ENCODE measurements at regions of chr2 and their contacts with region 1.

Region 1: DNA sequence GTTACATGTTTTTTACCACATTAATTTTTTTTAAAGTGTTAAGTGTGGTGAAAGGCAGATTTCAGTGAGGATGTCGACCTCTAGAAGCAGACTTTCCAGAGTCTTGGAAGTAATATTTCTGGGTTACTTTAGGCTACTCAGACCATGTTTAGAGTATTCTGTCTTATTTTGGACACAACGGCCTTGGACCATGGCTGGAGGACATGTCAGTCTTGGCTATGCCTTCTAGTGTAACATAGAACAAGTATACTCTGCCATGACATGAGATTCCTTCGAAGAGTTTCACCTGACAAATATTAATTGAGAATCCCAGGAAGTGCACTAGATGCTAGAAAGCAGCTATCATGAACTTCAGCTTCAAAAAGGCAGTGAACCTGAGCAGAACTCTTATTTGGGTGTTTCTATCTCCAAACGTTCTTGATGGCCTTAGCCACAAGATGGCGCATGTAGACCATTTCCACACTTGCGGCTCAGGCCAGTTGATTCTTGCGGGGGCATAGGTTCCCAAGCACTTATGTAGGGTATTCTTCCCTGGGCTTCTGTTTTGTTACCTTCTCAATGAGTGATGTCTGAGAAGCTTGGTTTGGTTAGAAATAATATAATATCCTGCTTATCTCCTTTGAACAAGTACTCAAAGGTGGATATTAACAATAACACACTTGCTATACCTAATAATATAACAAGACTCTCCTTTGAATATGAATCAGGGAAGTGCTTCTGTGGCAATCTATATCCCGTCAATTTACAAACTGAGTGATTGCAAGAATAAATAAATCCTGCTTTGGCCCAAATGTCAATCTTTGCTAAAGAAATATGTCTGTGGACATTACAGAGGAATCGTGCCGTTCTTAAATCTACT is 62.0 kb downstream of the CACNB4 start:
- DNase-seq: peak; percentile 26 to 49
- ATAC-seq: peak; percentile 82 to 83
- H3K4me3 ChIP-seq: no peak overlapping the region
- H3K27ac ChIP-seq: no peak overlapping the region
- H3K4me1 ChIP-seq: peaks cover 15 to 19% of the 10 kb centered on the region in 2 donors
- H3K27me3 ChIP-seq: no peaks in the 10 kb centered on the region
- CTCF ChIP-seq: peak; percentile 44 to 83 (median 63)
- POLR2A ChIP-seq: no peak

Region 2: DNA sequence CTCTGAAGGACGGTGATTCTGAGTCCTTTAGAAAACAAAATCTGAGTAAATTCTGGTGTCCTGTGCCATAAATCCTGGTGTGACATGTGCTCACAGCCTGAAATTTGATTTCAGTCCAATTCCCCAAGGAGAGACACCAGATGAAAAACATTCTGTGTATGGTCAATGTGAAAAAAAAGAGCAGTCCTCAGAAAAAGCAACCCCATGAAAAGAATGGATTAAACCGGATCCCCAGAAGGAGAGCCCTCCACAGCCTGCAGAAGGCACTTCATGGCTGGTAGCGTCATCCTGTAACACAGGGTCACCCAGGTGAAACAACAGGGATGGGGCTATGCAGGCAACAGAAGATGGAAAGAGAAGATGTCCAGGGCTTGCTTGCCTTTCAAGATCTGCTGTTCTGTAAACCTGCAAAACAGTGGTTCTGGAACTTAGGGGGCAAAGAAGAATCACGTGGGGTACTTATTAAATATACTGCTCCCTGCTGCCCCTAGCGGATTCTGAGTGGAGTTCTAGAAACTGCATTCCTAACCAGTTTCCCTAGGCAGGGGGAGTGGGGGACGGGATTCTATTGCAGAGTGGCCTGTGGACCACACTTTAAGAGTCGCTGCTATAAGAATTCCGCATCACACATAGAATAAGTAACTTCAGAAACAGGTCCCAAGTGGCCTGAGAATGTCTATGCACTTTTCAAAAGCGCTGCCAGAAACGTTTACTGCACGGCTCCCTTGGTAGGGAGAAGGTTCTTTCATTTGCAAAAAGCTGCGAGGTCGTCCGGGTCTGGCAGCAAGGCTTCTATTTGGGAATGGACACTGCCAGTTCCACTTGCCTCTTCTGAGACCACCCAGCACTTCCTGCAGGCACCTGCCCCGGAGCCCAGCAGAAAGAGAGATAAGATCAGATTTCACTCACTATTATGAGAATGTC is 89.7 kb before region 1 on chr2:
- in situ Hi-C with region 1: no loop called
- intact Hi-C with region 1: no loop called
- DNase-seq: no peak
- ATAC-seq: peak; percentile 44 to 79
- H3K4me3 ChIP-seq: peak overlapping the region; percentile 8 to 52 (median 40)
- H3K27ac ChIP-seq: peak overlapping the region in 3 of 4 donors; percentile 19 to 47 (median 21)
- H3K4me1 ChIP-seq: peaks cover 4 to 17% of the 10 kb centered on the region in 2 donors
- H3K27me3 ChIP-seq: no peaks in the 10 kb centered on the region
- CTCF ChIP-seq: peak; percentile 61 to 70 (median 66)
- POLR2A ChIP-seq: no peak

Region 3: DNA sequence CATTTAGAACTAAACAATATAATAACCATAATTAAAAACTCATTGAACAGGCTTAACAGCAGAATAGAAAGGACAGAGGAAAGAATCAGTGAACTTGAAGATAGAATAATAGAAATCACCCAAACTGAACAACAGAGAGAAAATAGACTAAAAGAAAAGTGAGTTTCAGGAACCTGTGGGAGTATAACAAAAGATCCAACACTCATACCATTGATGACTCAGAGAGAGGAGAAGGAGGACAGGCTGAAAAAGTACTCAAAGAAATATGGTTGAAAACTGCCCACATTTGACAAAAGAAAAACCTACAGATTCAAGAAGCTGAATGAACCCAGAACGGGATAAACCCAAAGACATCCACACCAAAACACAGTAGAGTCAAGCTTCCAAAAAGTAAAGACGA is 243.9 kb after region 1 on chr2:
- in situ Hi-C with region 1: no loop called
- intact Hi-C with region 1: no loop called
- DNase-seq: no peak
- ATAC-seq: no peak
- H3K4me3 ChIP-seq: no peak overlapping the region
- H3K27ac ChIP-seq: no peak overlapping the region
- H3K4me1 ChIP-seq: no peaks in the 10 kb centered on the region
- H3K27me3 ChIP-seq: no peaks in the 10 kb centered on the region
- CTCF ChIP-seq: no peak
- POLR2A ChIP-seq: no peak

Region 4: DNA sequence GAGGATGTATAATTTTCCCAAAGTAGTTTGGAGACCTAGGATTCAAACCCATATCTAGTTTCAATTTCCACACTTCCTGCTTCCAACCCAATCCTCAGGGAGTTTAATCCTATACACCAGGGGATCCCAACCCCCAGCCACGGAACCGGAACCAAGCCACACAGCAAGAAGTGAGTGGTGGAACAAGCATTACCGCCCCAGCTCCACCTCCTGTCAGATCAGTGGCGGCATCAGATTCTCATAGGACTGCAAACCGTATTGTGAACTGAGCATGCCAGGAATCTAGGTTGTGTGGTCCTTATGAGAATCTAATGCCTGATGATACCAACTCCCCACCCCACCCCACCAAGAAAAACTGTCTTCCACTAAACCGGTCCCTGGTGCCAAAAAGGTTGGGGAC is 627.9 kb after region 1 on chr2:
- in situ Hi-C with region 1: no loop called
- intact Hi-C with region 1: no loop called
- DNase-seq: no peak
- ATAC-seq: no peak
- H3K4me3 ChIP-seq: no peak overlapping the region
- H3K27ac ChIP-seq: no peak overlapping the region
- H3K4me1 ChIP-seq: no peaks in the 10 kb centered on the region
- H3K27me3 ChIP-seq: no peaks in the 10 kb centered on the region
- CTCF ChIP-seq: no peak
- POLR2A ChIP-seq: no peak

Region 5: DNA sequence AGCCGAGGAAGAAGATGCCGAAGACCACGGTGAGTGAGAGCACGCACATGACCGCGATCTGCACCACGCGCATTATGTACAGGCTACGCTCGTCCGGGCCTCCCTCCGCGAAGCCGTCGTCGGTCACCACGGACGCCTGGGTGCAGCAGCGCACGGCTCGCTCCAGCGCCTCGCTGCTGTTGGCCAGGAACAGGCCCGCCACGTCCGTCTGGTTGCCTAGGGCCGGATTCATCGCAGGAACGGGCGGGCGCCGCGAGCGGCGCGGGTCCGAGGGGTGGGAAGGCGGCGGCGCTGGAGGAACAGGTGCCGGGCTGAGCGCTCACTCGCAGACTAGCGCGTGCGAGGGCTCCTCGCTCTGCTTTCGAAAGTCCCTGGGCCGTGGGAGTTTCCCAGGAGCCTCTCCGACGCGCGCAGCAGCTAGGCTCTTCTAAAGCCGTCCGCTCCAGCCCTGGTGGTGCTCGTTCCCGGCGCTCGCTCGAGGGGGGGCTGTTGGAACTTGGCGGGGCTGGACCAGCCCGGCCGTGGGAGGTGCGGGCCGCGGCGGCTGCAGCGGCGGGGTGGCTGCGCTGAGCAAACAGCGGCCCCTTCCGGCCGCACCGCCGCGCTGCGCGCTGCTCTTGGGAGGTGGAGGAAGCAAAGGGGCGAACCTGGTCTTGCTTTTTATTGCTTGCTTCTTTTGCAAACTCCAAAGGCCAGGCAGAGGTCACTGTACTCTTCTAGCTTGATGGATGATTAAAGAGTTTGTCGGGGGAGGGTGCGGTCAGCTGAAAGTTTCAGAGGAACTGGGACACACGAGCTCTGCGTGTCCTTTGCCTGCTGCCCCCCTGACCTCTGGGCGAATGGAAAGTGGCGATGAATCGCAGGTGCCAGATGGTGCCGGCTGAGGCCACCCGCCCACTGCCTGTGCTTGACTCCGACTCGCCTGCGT is 1441.8 kb after region 1 on chr2 and contains the start of gene RPRM:
- in situ Hi-C with region 1: no loop called
- intact Hi-C with region 1: loop called (anchors 5 kb)
- DNase-seq: no peak
- ATAC-seq: peak; percentile 73 to 80
- H3K4me3 ChIP-seq: peak within 1 kb of the TSS; percentile 43 to 74 (median 55)
- H3K27ac ChIP-seq: no peak within 1 kb of the TSS
- H3K4me1 ChIP-seq: peaks cover 16% of the 10 kb centered on the region in 2 donors
- H3K27me3 ChIP-seq: peaks cover 42 to 71% (median 70%) of the 10 kb centered on the region in 3 donors
- CTCF ChIP-seq: peak; percentile 40 to 80 (median 60)
- POLR2A ChIP-seq: no peak
- total RNA-seq, gene RPRM: not detected

Region 6: GRCh38 chr2:153519257-153519875 is 1482.5 kb after region 1 on chr2:
- in situ Hi-C with region 1: loop called in 3 of 4 experiments (anchors 10 to 25 kb)
- intact Hi-C with region 1: loop called (anchors 2 kb)
- DNase-seq: no peak
- ATAC-seq: no peak
- H3K4me3 ChIP-seq: no peak overlapping the region
- H3K27ac ChIP-seq: no peak overlapping the region
- H3K4me1 ChIP-seq: no peaks in the 10 kb centered on the region
- H3K27me3 ChIP-seq: no peaks in the 10 kb centered on the region
- CTCF ChIP-seq: peak in 4 of 5 experiments; percentile 55 to 76 (median 64)
- POLR2A ChIP-seq: no peak

Region 7: DNA sequence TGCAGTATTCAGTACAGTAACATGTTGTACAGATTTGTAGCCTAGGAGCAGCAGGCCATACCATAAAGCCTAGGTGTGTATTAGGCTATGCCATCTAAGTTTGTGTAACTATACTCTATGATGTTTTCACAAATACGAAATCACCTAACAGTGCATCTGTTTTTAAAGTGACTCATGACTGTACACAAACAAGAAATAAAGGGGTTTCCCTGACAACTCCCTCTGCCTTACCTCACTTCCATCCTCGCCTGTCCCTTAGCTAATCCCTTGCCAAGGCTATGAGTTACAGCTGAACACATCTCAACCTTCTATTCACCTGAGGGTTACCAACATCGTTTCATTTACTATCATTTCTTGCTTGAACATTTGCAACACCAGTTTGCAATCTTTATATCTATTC is 1520.4 kb after region 1 on chr2:
- in situ Hi-C with region 1: no loop called
- intact Hi-C with region 1: no loop called
- DNase-seq: no peak
- ATAC-seq: no peak
- H3K4me3 ChIP-seq: no peak overlapping the region
- H3K27ac ChIP-seq: no peak overlapping the region
- H3K4me1 ChIP-seq: no peaks in the 10 kb centered on the region
- H3K27me3 ChIP-seq: no peaks in the 10 kb centered on the region
- CTCF ChIP-seq: no peak
- POLR2A ChIP-seq: no peak